Esophagus squamous epithelium (tissue), 5 donors: ENCODE measurements at regions of chr12 and their contacts with region 1.

Region 1: GRCh38 chr12:116599285-116600136 is 40.3 kb downstream of the MAP1LC3B2 start:
- DNase-seq: peak; percentile 10
- H3K4me3 ChIP-seq: peak overlapping the region in 3 of 4 donors; percentile 27 to 58 (median 29)
- H3K27ac ChIP-seq: peak overlapping the region; percentile 50 to 86 (median 76)
- H3K4me1 ChIP-seq: peaks cover 27 to 63% (median 34%) of the 10 kb centered on the region in 3 donors
- H3K27me3 ChIP-seq: no peaks in the 10 kb centered on the region
- CTCF ChIP-seq: peak; percentile 34 to 70 (median 56)
- POLR2A ChIP-seq: no peak

Region 2: DNA sequence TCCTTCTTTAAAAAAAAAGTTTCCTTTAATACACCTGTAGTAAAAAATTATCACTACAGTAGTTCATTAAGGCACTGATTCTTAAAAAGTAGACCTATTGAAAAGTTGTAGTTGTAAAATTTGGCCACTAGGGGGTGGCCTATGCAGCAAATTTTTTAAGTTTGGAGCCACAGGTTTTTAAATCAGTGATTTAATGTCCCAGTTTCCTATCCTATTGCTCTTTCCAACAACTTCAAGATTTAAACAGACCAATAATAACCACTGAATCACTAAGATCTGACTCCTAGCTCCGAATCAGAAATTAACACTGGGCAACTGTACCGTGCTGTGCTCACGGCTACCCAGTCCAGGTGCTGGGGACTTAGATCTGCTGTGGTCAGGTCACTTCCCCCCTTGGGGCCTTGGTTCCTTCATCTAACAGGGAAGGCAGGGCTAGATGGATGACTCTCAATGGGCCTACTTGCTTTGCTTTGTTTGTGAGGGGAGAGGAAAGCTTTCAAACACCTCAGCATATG is 601.3 kb before region 1 on chr12:
- intact Hi-C with region 1: loop called (anchors 5 kb)
- DNase-seq: no peak
- H3K4me3 ChIP-seq: no peak overlapping the region
- H3K27ac ChIP-seq: peak overlapping the region; percentile 6 to 57 (median 34)
- H3K4me1 ChIP-seq: peaks cover 0 to 27% (median 10%) of the 10 kb centered on the region in 3 donors
- H3K27me3 ChIP-seq: no peaks in the 10 kb centered on the region
- CTCF ChIP-seq: peak; percentile 56 to 85 (median 80)
- POLR2A ChIP-seq: no peak

Region 3: DNA sequence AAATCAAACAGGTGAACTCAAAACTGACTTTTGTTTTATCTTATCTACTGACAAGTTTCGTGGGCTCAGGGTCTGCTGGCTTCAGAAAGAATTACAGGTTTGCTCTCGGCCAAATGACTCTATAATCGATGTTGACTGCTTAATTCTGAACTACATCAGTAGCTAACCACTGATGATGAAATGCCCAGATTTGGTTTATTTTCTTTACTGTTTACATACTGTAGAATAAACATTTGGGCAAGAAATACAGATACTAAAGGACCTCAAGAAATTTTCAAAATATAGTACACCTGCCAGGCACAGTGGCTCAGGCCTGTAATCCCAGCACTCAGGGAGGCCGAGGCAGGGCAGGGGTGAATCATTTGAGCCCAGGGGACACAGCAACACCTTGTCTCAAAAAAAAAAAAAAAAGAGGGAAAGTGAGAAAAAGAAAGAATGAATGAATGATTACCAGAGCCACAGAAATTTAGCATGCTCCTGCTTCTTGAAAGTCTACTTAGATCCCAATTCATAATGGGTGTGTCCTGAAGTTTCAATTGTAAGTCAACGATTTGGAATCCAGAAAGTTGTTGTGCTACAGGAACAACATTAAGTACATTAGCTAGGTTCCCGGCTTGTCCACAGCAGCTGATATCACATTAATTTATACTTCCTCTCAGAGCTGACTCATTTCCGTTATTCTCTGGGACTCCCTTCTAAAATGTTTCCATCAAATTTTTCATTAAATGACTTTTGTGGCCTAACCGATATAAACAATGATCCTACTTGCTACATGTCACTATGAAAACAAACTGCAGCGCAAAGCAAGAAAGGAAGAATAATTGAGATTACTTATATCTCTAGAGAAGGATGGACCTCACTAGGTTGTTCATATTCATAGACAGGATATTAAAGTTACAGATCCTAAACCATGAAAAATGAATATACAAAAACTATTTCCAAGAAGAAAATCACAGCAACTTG is 456.3 kb before region 1 on chr12:
- intact Hi-C with region 1: loop called (anchors 10 kb)
- DNase-seq: no peak
- H3K4me3 ChIP-seq: no peak overlapping the region
- H3K27ac ChIP-seq: peak overlapping the region in 2 of 4 donors; percentile 18 to 21
- H3K4me1 ChIP-seq: peaks cover 6 to 71% (median 30%) of the 10 kb centered on the region in 3 donors
- H3K27me3 ChIP-seq: no peaks in the 10 kb centered on the region
- CTCF ChIP-seq: no peak
- POLR2A ChIP-seq: no peak

Region 4: GRCh38 chr12:116277393-116278278 is 321.9 kb before region 1 on chr12 and contains the start of gene MED13L:
- intact Hi-C with region 1: loop called (anchors 10 kb)
- DNase-seq: peak; percentile 52
- H3K4me3 ChIP-seq: peak within 1 kb of the TSS; percentile 72 to 94 (median 84)
- H3K27ac ChIP-seq: peak within 1 kb of the TSS; percentile 95 to 100 (median 98)
- H3K4me1 ChIP-seq: peaks cover 15 to 41% (median 18%) of the 10 kb centered on the region in 3 donors
- H3K27me3 ChIP-seq: no peaks in the 10 kb centered on the region
- CTCF ChIP-seq: peak in 5 of 6 experiments; percentile 7 to 44 (median 30)
- POLR2A ChIP-seq: peak in 2 of 4 donors; percentile 52 to 68
- total RNA-seq, gene MED13L: 52.2 to 137 (median 62.1) TPM